ENCODE measurements at regions of chr11 and their contacts with region 1.

Region 1: GRCh38 chr11:70397983-70398833 is at the start of gene CTTN:
- DNase-seq: peak; percentile 88
- H3K4me3 Mint-ChIP-seq: peak within 1 kb of the TSS; percentile 85
- H3K27ac Mint-ChIP-seq: peak within 1 kb of the TSS; percentile 84
- H3K4me1 Mint-ChIP-seq: peaks cover 25% of the 10 kb centered on the region
- H3K27me3 Mint-ChIP-seq: peaks cover 53% of the 10 kb centered on the region
- total RNA-seq, gene CTTN: 56.7 and 57.0 TPM in 2 replicates

Region 2: DNA sequence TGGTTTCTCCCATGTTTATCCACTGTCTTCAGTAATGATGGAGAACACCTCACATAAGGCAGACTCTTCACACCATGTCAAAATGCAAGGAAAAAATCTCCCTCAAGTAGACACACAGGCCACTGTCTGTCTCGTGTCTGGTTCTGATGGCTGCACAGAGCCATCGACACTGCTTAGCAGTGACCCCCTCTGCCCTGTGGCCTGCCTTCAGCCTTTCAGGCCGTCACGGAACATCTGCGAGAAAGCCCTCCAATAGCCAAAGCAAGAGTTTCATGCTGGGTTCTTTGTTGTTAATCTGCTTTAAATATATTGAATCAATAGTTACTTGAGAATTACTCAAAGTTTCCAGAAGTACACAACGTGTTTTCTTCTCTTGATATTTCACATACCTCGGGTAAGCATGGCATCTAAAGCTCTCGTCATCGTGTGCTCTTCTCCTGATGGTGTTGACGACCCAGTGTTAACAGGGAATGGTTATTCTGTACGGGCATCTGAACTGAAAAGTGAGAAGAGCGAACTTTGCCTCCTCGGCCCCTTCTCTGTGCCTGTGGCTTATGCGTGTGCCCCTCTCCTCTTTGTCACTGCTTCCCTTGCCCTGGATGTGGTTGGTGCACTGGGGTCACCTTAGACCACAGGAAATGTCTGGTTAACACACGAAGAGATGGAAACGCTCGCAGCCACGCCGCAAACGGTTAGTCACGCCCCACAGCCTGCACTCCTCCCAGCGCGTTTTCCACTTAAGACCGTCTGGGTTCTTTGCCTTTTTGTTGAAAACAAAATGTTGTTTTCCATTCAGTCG is 33.3 kb before region 1 on chr11:
- intact Hi-C with region 1: loop called (anchors 1 kb)
- DNase-seq: peak; percentile 91
- H3K4me3 Mint-ChIP-seq: peak overlapping the region; percentile 79
- H3K27ac Mint-ChIP-seq: peak overlapping the region; percentile 97
- H3K4me1 Mint-ChIP-seq: peaks cover 25% of the 10 kb centered on the region
- H3K27me3 Mint-ChIP-seq: no peaks in the 10 kb centered on the region

Measured in activated CD4-positive, alpha-beta T cell treated with anti-CD3 and anti-CD28 coated beads, Interleukin-2, amount 10 ng/mL, durations not matched to agents 24 days and 14 days (primary cell).